ENCODE measurements at regions of chr1 and their contacts with region 1.

Region 1: DNA sequence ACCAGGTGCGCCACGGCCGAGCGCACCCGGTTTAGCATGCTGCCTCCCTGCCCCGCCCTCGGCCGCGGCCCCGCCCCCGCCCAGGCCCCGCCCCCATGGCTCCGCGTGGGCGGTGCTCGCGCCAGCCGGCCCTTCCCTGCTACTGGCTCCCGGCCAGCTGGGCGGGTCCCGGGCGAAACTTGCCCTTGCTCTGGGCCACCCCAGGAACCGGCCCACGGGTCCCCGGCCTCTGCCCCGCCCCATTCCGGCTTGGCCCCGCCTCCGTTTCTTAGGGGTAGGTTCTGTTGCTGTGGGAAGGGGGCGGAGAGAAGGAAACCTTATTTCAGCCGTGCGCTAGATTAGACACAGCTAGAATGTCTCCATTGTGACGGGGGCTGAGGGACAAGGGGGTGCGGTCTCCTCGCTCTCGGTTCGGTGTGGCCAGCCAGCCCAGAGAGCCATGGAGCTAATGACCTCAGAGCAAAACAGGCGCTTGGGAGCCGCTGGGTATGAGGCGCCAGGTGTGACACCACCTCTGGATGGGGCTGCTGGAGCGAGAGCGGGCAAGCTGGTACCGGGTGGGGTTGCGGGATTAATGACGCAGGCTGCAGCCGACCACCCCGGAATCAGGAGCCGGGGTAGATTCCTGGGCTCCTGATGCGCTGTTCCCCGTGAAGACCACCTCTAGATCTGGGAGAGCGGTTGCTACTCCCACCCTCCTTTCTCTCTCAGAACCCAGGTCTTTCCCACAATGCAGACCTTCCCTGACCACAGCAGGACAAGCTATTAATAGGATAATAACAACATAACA is at the start of gene PPM1J:
- DNase-seq: peak; percentile 96 to 99
- H3K4me3 ChIP-seq: peak within 1 kb of the TSS; percentile 80 to 85
- H3K27ac ChIP-seq: peak within 1 kb of the TSS; percentile 62 to 65
- H3K4me1 ChIP-seq: peaks cover 6 to 13% of the 10 kb centered on the region in 2 donors
- H3K27me3 ChIP-seq: no peaks in the 10 kb centered on the region
- CTCF ChIP-seq: no peak
- total RNA-seq, gene PPM1J: 10.0 TPM

Region 2: GRCh38 chr1:112390775-112391602 is 324.5 kb before region 1 on chr1:
- intact Hi-C with region 1: loop called (anchors 2 kb)
- DNase-seq: peak; percentile 71 to 97
- H3K4me3 ChIP-seq: peak overlapping the region; percentile 48 to 64
- H3K27ac ChIP-seq: peak overlapping the region; percentile 92 to 98
- H3K4me1 ChIP-seq: peaks cover 8 to 45% of the 10 kb centered on the region in 2 donors
- H3K27me3 ChIP-seq: no peaks in the 10 kb centered on the region
- CTCF ChIP-seq: peak; percentile 90 to 96 (median 91)

Region 3: GRCh38 chr1:112882271-112882744 is 166.8 kb after region 1 on chr1:
- intact Hi-C with region 1: loop called (anchors 5 kb)
- DNase-seq: no peak
- H3K4me3 ChIP-seq: no peak overlapping the region
- H3K27ac ChIP-seq: no peak overlapping the region
- H3K4me1 ChIP-seq: no peaks in the 10 kb centered on the region
- H3K27me3 ChIP-seq: no peaks in the 10 kb centered on the region
- CTCF ChIP-seq: no peak

Region 4: DNA sequence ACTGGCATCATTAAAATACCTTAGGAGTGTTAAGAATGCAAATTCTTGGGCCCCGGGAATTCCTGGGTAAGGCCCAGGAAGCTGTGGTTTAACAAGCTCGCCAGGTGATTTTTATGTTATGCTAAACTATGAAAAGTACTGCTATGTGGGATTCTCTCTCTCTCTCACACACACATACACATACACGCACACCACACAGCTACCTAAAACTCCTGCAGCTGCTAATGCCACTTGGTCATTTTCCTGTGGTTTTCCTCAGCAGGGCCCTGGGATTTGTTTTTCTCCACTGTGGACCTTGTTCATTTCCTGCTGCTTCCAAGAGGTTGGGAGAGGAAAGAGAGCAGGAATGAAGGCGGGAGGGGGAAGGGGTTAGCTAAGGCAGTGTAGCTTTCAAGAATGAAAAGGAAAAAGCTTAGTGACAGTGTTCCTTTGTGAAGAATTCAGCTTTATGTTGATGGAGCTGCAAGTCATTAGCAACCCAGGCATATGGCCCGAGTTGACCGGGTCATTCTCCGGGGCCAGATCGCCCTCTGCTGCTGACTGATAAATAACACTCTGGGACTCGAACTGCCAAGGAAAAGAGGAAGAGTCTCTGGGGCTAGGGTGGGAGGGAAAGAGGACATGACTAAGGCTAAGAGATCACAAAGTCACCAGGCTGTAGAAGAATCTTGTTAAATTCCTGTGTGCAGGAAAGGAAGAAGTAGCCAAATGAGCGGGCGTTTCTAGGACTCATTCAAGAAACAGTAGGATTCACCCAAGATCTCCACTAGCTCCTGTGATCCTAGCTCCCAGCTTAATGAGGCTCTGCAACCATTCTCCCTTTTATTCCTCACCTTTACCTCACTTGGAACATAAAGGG is 327.1 kb after region 1 on chr1:
- intact Hi-C with region 1: loop called (anchors 1 kb)
- DNase-seq: peak; percentile 37 to 85
- H3K4me3 ChIP-seq: no peak overlapping the region
- H3K27ac ChIP-seq: no peak overlapping the region
- H3K4me1 ChIP-seq: peaks cover 0 to 5% of the 10 kb centered on the region in 2 donors
- H3K27me3 ChIP-seq: no peaks in the 10 kb centered on the region
- CTCF ChIP-seq: peak; percentile 61 to 83 (median 66)

Region 5: DNA sequence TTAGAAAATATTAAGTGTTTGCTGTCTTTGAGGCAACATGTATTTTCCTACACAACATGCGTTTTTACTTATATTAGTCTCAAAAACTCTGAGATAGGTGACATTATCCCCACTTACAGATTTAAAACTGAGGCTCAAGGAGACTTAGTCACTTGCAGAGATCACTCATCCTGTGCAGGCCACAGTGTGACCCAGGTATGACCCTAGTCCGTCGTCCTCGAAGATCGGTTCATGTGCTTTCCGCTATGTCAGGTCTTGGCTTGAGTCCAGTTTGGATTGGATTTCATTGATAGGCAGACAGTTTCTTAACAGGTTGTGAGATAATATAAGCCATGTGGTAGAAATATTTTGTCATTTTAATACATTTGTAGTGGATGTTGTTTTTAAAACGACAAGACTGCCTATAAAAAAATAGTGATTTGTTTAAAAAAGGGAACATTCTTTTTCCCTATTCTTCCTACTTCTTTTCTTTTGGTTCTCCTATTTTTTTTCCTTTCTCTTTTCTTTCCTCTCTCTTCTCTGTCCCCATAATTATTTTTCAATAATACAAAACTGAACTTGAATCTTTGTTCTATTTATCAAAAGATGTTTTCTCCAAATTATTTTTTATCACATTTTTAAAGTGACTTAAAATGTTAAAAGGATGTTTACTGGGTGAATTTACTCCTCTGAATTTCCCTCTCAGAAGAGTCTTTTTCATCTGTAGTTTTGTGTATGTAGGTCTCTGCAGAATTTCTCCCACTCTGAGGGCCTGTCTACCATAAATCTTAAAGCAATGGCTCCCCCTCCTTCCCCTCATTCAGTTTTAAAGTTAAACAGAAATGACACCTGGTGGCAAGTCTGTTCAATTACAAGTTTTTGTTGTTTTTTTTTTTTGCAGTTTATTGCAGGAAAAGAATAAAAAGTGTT is 962.0 kb after region 1 on chr1:
- intact Hi-C with region 1: loop called (anchors 5 kb)
- DNase-seq: no peak
- H3K4me3 ChIP-seq: no peak overlapping the region
- H3K27ac ChIP-seq: no peak overlapping the region
- H3K4me1 ChIP-seq: no peaks in the 10 kb centered on the region
- H3K27me3 ChIP-seq: no peaks in the 10 kb centered on the region
- CTCF ChIP-seq: peak in 2 of 3 experiments; percentile 61 to 71

Measured in ascending aorta (tissue), 2 donors.